ENCODE measurements at regions of chr9 and their contacts with region 1.

Region 1: DNA sequence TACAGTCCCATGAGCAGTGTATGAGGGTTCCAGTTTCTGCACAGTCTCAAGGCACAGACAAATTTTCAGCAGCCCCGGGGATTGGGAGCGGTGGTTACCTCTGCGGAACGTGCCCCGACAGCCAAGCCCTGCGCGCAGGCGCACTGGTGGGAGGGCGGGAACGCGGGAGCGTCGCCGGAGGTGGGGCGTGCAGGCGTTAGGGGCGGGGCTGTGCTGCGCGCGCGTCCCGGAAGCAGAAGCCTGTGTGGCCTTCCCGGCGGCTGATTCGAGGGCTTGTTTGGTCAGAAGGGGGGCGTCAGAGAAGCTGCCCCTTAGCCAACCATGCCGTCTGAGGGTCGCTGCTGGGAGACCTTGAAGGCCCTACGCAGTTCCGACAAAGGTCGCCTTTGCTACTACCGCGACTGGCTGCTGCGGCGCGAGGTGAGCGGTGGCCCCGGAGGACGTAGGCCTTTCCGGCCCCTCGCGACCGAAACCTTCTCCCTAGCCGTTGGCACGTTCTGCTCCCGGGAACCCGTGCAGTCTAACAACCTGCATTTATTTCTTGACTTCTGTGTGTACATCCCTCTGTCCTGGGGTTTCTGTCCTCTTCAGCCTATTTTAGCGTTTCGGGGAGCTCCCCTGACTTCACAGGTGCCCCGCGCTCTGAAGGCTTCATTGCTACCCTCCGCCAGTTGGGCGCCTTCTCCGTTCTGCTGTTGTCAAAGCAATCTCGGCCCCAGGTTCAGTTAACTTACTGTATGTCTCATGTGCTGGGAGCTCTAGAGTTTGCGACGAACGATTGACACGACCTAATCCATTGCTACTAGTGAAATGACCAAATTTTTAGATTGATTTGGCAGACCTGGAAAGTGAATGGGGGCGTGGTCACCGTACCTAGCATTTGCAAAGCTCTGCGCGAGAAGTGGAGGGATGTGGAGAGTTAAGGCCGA is at the start of gene GLE1:
- DNase-seq: peak; percentile 100

Region 2: GRCh38 chr9:128523199-128523925 is 18.6 kb after region 1 on chr9:
- CTCF ChIA-PET with region 1: interaction called, 3 read pairs
- POLR2A ChIA-PET with region 1: interaction called, 12 read pairs
- DNase-seq: no peak

Region 3: DNA sequence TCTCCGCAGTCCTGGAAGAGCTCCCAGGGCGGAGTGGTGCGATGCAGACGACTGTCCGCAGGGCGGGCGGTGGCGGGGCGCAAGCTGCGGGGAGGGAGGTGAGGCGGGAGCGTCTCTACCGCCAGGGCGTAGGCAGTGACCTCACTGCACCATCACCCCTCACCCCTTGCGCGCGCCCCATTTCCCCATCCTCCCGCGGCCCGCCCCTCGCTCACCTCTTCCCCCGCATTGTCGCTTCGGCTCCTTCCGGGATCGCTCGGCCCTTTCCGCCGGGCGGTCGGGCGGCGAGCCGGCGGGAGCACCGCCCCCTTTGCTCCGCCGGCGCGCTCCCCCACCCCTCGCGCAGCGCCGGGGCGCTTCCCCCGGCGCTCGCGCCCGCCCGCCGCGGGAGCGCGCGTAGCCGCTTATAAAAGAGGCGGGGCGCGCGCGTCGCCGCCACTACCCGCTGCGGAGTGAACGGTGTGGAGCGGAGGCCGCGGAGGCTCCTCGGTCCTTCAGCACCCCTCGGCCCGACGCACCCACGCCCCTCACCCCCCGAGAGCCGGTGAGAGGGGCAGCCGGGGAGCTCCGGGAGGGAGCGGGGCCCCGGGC is 47.5 kb after region 1 on chr9 and contains the start of gene SPTAN1:
- CTCF ChIA-PET with region 1: no interaction called
- POLR2A ChIA-PET with region 1: interaction called, 22 read pairs
- DNase-seq: peak; percentile 98

Region 4: GRCh38 chr9:128798896-128799295 is 294.1 kb after region 1 on chr9:
- CTCF ChIA-PET with region 1: no interaction called
- POLR2A ChIA-PET with region 1: no interaction called
- DNase-seq: no peak